Mammary epithelial cell (primary cell): ENCODE measurements at regions of chr6 and their contacts with region 1.

Region 1: GRCh38 chr6:30828027-30828960 is 56.0 kb upstream of the DDR1 start:
- DNase-seq: peak; percentile 88
- H3K4me3 ChIP-seq: no peak overlapping the region
- H3K27ac ChIP-seq: peak overlapping the region; percentile 58
- H3K4me1 ChIP-seq: peaks cover 28% of the 10 kb centered on the region
- H3K27me3 ChIP-seq: no peaks in the 10 kb centered on the region
- CTCF ChIP-seq: peak; percentile 95

Region 2: GRCh38 chr6:30752157-30752927 is 76.0 kb before region 1 on chr6:
- CTCF ChIA-PET with region 1: no interaction called
- dilution Hi-C with region 1: loop called (anchors 5 kb)
- in situ Hi-C with region 1: no loop called
- intact Hi-C with region 1: no loop called
- DNase-seq: peak; percentile 100
- H3K4me3 ChIP-seq: no peak overlapping the region
- H3K27ac ChIP-seq: peak overlapping the region; percentile 97
- H3K4me1 ChIP-seq: peaks cover 61% of the 10 kb centered on the region
- H3K27me3 ChIP-seq: no peaks in the 10 kb centered on the region
- CTCF ChIP-seq: peak in 1 of 2 donors; percentile 29

Region 3: DNA sequence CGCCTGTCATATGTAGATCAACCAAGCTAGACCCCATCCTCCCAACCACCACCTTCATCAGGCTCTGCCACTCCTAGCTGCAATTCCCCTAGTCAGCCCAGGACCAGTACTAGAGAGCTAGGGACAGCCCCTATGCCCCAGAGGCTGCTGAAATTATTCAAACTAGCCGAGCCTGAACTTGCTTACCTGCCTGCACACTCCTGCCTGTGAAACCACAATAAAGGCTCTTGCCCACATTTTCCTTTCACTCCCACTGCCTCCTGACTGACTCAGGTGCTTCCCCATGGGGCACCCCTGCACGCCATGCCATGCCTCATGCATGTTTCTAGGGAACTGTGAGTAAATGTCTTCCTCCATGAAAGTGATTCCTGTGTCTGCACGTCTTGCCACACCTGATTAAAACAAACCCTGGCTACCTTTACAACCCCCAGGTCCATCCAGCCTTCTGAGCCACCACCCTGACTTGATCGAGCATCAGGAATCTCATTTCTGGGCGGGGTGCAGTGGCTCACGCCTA is 17.4 kb before region 1 on chr6:
- CTCF ChIA-PET with region 1: no interaction called
- dilution Hi-C with region 1: no loop called
- in situ Hi-C with region 1: no loop called
- intact Hi-C with region 1: no loop called
- DNase-seq: peak; percentile 100
- H3K4me3 ChIP-seq: no peak overlapping the region
- H3K27ac ChIP-seq: peak overlapping the region; percentile 84
- H3K4me1 ChIP-seq: peaks cover 40% of the 10 kb centered on the region
- H3K27me3 ChIP-seq: no peaks in the 10 kb centered on the region
- CTCF ChIP-seq: peak in 1 of 2 donors; percentile 3

Region 4: DNA sequence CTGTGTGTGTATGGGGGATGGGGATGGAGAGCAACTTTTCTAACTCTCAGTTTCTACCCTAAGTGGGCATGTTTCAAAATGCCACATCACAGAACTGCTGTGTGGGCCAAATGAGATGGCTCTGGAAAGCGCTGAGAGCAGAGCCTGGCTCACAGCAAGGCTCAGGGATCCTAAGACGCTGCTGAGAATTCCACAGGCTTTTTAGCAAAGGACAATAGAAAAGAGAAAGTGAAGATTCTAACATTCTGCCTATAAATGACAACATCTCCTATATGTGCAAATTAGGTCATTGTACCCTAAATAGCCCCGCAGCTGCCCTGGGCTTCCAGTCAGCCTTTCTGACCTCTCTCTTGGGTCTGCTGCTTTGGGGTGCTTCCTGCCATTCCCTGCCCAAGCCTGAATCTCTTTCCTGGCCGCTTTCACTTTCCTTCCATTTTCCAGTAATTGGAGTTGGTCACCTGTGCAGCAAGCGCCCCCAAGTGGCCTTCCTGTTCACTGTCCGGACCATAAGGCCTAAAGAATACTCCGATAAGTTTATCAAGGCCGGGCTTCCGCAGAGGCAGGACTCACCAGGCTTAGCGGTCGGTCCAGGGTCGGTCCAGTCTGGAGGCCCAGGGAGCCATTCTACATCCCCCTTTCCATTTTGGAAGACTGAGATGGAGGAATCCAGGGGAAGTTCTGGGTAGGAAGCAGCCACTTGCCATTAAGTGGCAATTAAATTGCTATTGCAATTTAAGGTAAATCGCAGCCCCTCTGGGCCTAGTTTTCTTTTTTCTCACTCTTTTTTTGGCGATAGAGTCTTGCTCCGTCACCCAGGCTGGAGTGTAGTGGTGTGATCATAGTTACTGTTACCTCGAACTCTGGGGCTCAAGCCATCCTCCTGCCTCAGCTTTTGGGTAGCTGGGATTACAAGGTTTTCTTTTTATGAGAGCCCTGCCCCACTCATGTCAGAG is 49.4 kb after region 1 on chr6:
- CTCF ChIA-PET with region 1: interaction called, 17 read pairs
- dilution Hi-C with region 1: no loop called
- in situ Hi-C with region 1: loop called (anchors 5 kb)
- intact Hi-C with region 1: loop called (anchors 1 kb)
- DNase-seq: peak; percentile 80
- H3K4me3 ChIP-seq: peak overlapping the region in 2 of 3 experiments; percentile 13 to 20
- H3K27ac ChIP-seq: peak overlapping the region; percentile 63
- H3K4me1 ChIP-seq: peaks cover 37% of the 10 kb centered on the region
- H3K27me3 ChIP-seq: no peaks in the 10 kb centered on the region
- CTCF ChIP-seq: peak; percentile 92 to 96

Region 5: DNA sequence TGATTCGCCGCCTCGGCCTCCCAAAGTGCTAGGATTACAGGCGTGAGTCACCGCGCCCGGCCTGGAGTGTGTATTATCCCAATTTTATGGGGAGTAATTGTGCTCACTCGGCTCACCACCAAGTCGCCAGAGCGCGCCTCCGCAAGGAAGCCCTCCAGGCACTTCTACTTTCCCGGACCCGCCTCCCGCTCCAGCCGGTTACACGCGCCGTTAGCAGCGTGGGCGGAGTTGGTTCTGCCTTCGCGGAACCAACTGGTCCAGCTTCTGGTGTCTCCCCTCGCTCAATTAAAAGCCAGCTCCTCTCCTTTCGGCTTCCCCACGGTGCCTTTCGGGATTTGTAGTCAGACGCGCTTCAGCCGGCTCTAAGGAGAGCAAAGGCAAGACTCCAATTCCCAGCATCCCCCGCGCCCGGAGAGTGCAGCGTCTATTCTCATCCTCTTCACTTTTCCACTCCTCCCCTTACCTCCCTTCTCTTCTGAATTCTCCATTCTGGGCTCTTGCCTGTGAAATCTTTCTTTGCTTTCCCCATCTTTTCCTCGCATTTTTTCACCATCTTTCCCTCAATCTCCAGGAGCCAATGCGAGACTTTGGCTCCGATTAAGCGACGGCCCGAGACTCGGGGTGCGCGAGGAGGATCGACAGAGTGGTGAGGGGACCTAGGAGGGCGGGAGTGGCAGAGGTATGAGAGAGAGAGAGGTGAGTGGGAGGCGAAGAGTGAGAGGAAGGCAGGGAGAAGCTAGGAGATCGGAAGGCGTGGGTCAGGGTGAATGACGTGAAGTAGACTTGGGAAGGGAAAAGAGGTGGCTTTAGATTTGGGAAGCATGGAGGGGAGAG is 79.7 kb after region 1 on chr6 and contains the start of gene GTF2H4:
- CTCF ChIA-PET with region 1: no interaction called
- dilution Hi-C with region 1: no loop called
- in situ Hi-C with region 1: no loop called
- intact Hi-C with region 1: loop called (anchors 1 kb)
- DNase-seq: peak; percentile 99
- H3K4me3 ChIP-seq: peak within 1 kb of the TSS; percentile 70 to 92 (median 71)
- H3K27ac ChIP-seq: peak within 1 kb of the TSS; percentile 63
- H3K4me1 ChIP-seq: peaks cover 8% of the 10 kb centered on the region
- H3K27me3 ChIP-seq: no peaks in the 10 kb centered on the region
- CTCF ChIP-seq: no peak
- total RNA-seq, gene GTF2H4: 17.0 to 41.1 TPM

Region 6: DNA sequence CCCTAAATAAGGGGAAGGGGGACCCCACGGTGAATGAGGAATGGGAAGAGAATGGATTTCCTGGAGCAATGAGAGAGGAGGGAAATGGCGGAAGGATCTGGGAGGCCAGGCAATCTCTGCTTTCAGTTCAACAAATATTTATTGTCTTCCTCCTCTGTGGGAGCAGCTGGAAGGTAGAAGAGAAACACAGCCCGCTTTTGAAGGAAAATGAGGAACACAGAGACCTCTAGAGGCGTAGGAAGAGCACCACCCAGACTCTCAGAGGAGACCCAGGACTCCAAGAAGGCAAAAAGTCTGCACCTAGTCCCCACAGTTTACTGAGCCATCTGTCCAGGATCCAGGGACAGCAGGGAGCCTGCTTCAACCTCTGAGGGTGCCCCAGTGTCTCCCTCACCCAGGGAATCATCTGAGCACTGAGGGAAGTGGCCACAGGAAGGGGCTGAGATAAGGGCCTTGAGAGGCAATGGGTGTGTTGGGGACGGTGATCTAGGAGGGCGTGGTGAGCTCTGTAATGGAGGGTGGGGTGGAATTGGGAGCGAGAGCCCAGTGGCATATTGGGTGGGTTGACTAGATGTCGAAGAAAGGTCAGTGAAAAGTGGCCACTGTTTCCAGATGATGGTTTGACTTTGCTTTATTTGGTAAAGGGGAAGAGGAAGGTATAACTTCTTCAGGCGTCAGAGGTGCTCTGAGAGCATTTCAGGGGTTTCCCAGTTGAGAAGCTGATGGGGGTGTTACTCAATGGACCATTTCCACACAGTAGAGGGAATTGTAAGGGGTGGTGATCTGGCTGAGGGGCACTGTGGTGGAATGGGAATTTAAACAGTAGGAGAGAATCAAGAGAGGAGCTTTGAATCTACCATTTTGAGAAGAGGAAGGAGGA is 286.9 kb after region 1 on chr6:
- CTCF ChIA-PET with region 1: no interaction called
- dilution Hi-C with region 1: loop called (anchors 10 kb)
- in situ Hi-C with region 1: no loop called
- intact Hi-C with region 1: no loop called
- DNase-seq: peak; percentile 24
- H3K4me3 ChIP-seq: peak overlapping the region; percentile 31 to 52 (median 39)
- H3K27ac ChIP-seq: peak overlapping the region; percentile 91
- H3K4me1 ChIP-seq: peaks cover 39% of the 10 kb centered on the region
- H3K27me3 ChIP-seq: no peaks in the 10 kb centered on the region
- CTCF ChIP-seq: peak in 1 of 2 donors; percentile 52

Region 7: GRCh38 chr6:31139599-31139998 is 311.3 kb after region 1 on chr6:
- CTCF ChIA-PET with region 1: no interaction called
- dilution Hi-C with region 1: no loop called
- in situ Hi-C with region 1: no loop called
- intact Hi-C with region 1: no loop called
- DNase-seq: no peak
- H3K4me3 ChIP-seq: no peak overlapping the region
- H3K27ac ChIP-seq: no peak overlapping the region
- H3K4me1 ChIP-seq: peaks cover 24% of the 10 kb centered on the region
- H3K27me3 ChIP-seq: no peaks in the 10 kb centered on the region
- CTCF ChIP-seq: no peak